ENCODE measurements at regions of chr3 and their contacts with region 1.

Region 1: GRCh38 chr3:143951351-143951971 is 20.2 kb upstream of the DIPK2A start:
- DNase-seq: peak; percentile 75
- H3K4me3 Mint-ChIP-seq: no peak overlapping the region
- H3K27ac Mint-ChIP-seq: no peak overlapping the region
- H3K4me1 Mint-ChIP-seq: peaks cover 1% of the 10 kb centered on the region
- H3K27me3 Mint-ChIP-seq: peaks cover 16% of the 10 kb centered on the region

Region 2: DNA sequence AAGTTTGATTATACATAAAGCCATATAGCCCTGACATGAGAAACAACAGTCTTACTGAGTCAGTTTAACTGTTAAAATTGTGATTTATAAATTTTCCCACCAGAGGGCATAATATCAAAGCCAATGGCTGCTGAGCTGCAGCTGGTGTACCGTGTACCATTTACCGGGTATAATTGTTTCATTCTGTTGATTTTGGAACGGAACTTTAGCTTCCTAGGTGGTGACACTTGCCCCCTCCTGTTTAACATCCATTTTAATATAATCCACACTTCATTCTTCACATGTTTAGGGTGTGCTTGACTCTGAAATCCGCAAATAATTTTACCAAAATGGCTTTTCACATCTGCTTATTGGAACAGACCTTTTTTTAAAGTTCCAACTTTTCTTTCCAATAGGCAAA is 176.0 kb before region 1 on chr3:
- intact Hi-C with region 1: loop called (anchors 1 kb)
- DNase-seq: peak; percentile 68
- H3K4me3 Mint-ChIP-seq: no peak overlapping the region
- H3K27ac Mint-ChIP-seq: no peak overlapping the region
- H3K4me1 Mint-ChIP-seq: no peaks in the 10 kb centered on the region
- H3K27me3 Mint-ChIP-seq: peaks cover 2% of the 10 kb centered on the region

Region 3: GRCh38 chr3:143885780-143886427 is 65.6 kb before region 1 on chr3:
- intact Hi-C with region 1: loop called (anchors 1 kb)
- DNase-seq: peak; percentile 69
- H3K4me3 Mint-ChIP-seq: no peak overlapping the region
- H3K27ac Mint-ChIP-seq: no peak overlapping the region
- H3K4me1 Mint-ChIP-seq: no peaks in the 10 kb centered on the region
- H3K27me3 Mint-ChIP-seq: peaks cover 21% of the 10 kb centered on the region

Region 4: GRCh38 chr3:143895805-143896204 is 55.7 kb before region 1 on chr3:
- intact Hi-C with region 1: loop called (anchors 2 kb)
- DNase-seq: peak; percentile 3
- H3K4me3 Mint-ChIP-seq: no peak overlapping the region
- H3K27ac Mint-ChIP-seq: no peak overlapping the region
- H3K4me1 Mint-ChIP-seq: no peaks in the 10 kb centered on the region
- H3K27me3 Mint-ChIP-seq: peaks cover 13% of the 10 kb centered on the region